ENCODE measurements at regions of chr2 and their contacts with region 1.

Region 1: DNA sequence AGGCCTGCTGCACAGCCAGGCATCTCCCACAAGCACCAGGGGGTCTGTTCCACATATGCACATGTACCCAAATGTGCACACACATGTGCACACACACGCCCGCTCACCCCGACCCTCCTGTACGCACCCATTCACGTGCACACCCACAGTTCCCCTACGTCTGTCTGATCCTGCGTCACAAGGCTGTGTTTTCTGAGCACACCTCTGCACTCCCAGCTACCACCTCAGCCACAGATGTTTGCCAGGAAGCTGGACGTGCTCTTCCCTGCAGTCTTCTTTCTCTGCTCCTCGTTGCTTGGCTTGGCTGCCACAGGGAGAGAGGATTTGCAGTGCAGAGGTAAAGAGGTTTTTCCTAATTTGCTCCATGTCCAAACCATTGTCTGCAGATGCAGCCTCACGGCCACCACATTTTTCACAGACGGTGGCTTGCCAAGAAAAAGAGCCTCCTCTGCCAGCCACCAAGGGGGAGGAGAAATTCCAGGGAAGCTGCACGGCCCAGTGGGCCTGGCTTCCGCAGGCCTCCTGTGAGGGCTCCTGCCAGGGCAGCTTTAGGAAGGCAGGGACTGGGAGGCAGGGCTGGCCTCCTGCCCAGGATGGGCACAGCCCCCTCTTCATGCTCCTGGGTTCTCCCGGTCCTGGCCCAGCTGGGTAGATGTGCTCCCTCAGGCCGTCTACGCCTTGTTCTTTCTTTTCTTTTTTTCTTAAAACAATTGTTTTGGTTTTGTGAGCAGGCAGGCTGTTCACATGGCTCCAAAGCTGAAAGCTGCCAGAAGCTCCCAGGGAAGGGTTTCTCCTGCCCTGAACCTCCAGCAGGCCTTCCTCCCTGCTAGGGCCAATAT is 29.3 kb upstream of the HS6ST1 start:
- DNase-seq: peak; percentile 83

Region 2: GRCh38 chr2:128292599-128293425 is 55.1 kb before region 1 on chr2:
- intact Hi-C with region 1: no loop called
- DNase-seq: no peak

Region 3: GRCh38 chr2:129301431-129301913 is 953.6 kb after region 1 on chr2:
- intact Hi-C with region 1: loop called (anchors 5 kb)
- DNase-seq: no peak